ENCODE measurements at regions of chr17 and their contacts with region 1.

Region 1: DNA sequence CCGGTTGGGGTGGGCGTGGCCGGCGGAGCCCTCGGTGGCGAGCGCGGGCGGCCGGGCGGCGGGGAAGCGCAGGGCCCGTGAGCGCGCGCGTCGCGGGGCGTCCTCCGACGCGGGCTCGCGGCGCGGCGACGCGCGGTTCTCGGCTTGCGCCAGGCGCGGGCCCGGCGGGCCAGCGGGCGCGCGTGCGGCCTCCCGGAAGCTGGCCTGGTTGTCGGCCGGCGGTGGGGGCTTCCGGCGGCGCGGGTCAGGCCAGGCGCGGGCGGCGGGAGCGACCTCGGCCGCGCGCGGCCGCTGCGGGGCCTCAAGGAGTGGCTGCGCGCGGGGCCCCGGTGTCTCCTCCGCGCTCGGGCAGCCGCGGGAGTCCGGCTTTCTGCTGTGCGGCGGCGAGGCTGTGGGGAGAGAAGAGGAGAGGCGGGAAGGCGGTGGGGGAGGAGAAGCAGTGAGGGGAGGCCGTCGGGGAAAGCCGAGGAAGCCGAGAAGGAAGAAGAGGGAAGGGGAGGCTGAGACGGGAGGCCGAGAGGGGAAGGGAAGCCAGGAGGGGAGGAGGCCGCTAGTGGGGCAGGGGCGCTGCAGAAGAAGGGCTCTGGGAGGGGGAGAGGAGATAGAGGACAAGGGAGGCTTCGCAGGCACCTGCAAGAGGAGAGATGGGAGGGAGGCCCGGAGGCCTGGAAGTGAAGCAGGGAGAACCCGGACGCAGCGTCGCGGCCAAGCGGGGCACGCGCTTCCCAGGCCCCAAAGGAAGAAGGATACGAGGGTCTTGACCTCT is 2.5 kb downstream of the C17orf58 start:
- DNase-seq: peak in 10 of 14 experiments; percentile 2 to 89 (median 60)
- ATAC-seq: peak; percentile 53
- H3K4me3 ChIP-seq: peak overlapping the region; percentile 69
- H3K4me3 Mint-ChIP-seq: peak overlapping the region; percentile 86
- H3K27ac ChIP-seq: no peak overlapping the region
- H3K27ac Mint-ChIP-seq: peak overlapping the region; percentile 75
- H3K4me1 ChIP-seq: peaks cover 39% of the 10 kb centered on the region
- H3K4me1 Mint-ChIP-seq: peaks cover 32% of the 10 kb centered on the region
- H3K27me3 ChIP-seq: peaks cover 6 to 14% of the 10 kb centered on the region in 2 experiments
- H3K27me3 Mint-ChIP-seq: peaks cover 19% of the 10 kb centered on the region
- CTCF ChIP-seq: no peak

Region 2: GRCh38 chr17:68019675-68020408 is 26.1 kb after region 1 on chr17:
- CTCF ChIA-PET with region 1: interaction called, 3 read pairs
- POLR2A ChIA-PET with region 1: interaction called, 18 read pairs
- intact Hi-C with region 1: loop called in 1 of 2 experiments (anchors 2 kb)
- DNase-seq: peak; percentile 91 to 99 (median 96)
- ATAC-seq: peak; percentile 93
- H3K4me3 ChIP-seq: peak overlapping the region; percentile 74
- H3K4me3 Mint-ChIP-seq: peak overlapping the region; percentile 87
- H3K27ac ChIP-seq: peak overlapping the region in 1 of 2 donors; percentile 55
- H3K27ac Mint-ChIP-seq: peak overlapping the region; percentile 92
- H3K4me1 ChIP-seq: peaks cover 14% of the 10 kb centered on the region
- H3K4me1 Mint-ChIP-seq: peaks cover 21% of the 10 kb centered on the region
- H3K27me3 ChIP-seq: no peaks in the 10 kb centered on the region
- H3K27me3 Mint-ChIP-seq: peaks cover 9% of the 10 kb centered on the region
- CTCF ChIP-seq: peak; percentile 44